HepG2 (cell line): ENCODE measurements at regions of chr6 and their contacts with region 1.

Region 1: GRCh38 chr6:120826253-120826652 is 508.0 kb downstream of the TBC1D32 start:
- DNase-seq: peak; percentile 52
- ATAC-seq: peak; percentile 97
- H3K4me3 ChIP-seq: no peak overlapping the region
- H3K27ac ChIP-seq: no peak overlapping the region
- H3K4me1 ChIP-seq: no peaks in the 10 kb centered on the region
- H3K27me3 ChIP-seq: no peaks in the 10 kb centered on the region
- CTCF ChIP-seq: peak; percentile 73
- EP300 ChIP-seq: no peak
- POLR2A ChIP-seq: no peak
- RAD21 ChIP-seq: peak; percentile 44; the same call in 1 of the 2 replicates

Region 2: GRCh38 chr6:119978274-119978889 is 847.9 kb before region 1 on chr6:
- CTCF ChIA-PET with region 1: interaction called, 3 read pairs
- POLR2A ChIA-PET with region 1: no interaction called
- in situ Hi-C with region 1: no loop called
- intact Hi-C with region 1: loop called (anchors 5 kb)
- DNase-seq: peak; percentile 15
- ATAC-seq: peak; percentile 83
- H3K4me3 ChIP-seq: no peak overlapping the region
- H3K27ac ChIP-seq: no peak overlapping the region
- H3K4me1 ChIP-seq: no peaks in the 10 kb centered on the region
- H3K27me3 ChIP-seq: no peaks in the 10 kb centered on the region
- CTCF ChIP-seq: peak; percentile 48
- EP300 ChIP-seq: no peak
- POLR2A ChIP-seq: no peak
- RAD21 ChIP-seq: no peak

Region 3: DNA sequence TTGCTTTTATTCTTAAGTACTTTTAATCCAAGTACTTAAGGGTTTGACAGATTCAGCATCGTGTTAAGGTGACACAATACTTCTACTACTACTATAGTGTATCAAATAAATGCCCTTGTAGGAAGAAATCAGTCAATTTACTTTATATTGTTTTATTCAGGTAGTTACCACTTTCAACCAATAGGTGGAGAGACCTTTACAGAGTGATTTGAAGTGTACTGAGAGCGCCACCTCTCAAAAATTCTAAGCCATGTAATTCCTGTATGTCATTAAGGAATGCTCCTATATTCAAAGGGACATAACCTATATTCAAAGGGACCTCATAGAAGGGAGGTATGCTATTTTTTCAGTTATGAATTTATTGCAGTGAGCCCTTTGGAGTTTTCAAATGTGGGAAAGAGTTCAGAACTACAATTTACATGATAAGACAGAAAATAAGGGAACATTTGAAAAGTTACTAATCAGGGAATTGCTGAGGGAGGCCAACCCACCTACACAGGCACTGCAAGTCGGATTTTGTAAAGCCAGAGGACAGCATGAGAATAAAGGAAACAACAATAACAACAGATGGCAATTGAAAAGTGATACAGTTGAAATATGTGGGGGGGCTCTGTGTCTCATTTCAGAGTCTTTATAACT is 447.6 kb before region 1 on chr6:
- CTCF ChIA-PET with region 1: no interaction called
- POLR2A ChIA-PET with region 1: no interaction called
- in situ Hi-C with region 1: no loop called
- intact Hi-C with region 1: loop called (anchors 2 kb)
- DNase-seq: peak; percentile 72
- ATAC-seq: peak; percentile 97
- H3K4me3 ChIP-seq: no peak overlapping the region
- H3K27ac ChIP-seq: no peak overlapping the region
- H3K4me1 ChIP-seq: no peaks in the 10 kb centered on the region
- H3K27me3 ChIP-seq: no peaks in the 10 kb centered on the region
- CTCF ChIP-seq: peak; percentile 65
- EP300 ChIP-seq: no peak
- POLR2A ChIP-seq: no peak
- RAD21 ChIP-seq: peak; percentile 40; the same call in 1 of the 2 replicates

Region 4: DNA sequence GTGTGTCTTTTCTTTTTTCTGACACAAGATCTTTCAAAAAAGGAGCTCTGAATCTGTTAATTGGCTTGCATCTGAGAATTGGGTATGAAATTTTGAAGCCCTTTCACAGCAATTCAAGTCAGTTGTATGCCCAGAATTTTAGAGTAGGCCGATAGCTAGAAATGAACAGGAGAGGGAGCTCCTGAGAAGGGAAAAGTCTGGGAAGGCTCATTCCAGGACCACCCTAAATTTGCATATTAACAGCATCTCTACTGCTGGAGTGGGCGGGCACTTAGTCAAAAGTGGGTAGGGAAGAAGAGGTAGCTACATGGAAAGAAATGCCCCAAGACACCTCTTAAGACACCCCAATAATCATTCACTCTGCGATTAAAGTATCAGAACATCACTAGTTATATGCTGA is 420.3 kb before region 1 on chr6:
- CTCF ChIA-PET with region 1: interaction called, 4 read pairs
- POLR2A ChIA-PET with region 1: no interaction called
- in situ Hi-C with region 1: no loop called
- intact Hi-C with region 1: loop called (anchors 1 kb)
- DNase-seq: no peak
- ATAC-seq: peak; percentile 63
- H3K4me3 ChIP-seq: no peak overlapping the region
- H3K27ac ChIP-seq: no peak overlapping the region
- H3K4me1 ChIP-seq: no peaks in the 10 kb centered on the region
- H3K27me3 ChIP-seq: no peaks in the 10 kb centered on the region
- CTCF ChIP-seq: 0 out of 2 replicates have a peak, but pooled peaks have one; percentile 24
- EP300 ChIP-seq: no peak
- POLR2A ChIP-seq: no peak
- RAD21 ChIP-seq: no peak